Sciatic nerve (tissue), 2 donors: ENCODE measurements at regions of chr9 and their contacts with region 1.

Region 1: GRCh38 chr9:136313111-136314055 is 9.5 kb upstream of the CCDC187 start:
- DNase-seq: no peak
- ATAC-seq: no peak

Region 2: DNA sequence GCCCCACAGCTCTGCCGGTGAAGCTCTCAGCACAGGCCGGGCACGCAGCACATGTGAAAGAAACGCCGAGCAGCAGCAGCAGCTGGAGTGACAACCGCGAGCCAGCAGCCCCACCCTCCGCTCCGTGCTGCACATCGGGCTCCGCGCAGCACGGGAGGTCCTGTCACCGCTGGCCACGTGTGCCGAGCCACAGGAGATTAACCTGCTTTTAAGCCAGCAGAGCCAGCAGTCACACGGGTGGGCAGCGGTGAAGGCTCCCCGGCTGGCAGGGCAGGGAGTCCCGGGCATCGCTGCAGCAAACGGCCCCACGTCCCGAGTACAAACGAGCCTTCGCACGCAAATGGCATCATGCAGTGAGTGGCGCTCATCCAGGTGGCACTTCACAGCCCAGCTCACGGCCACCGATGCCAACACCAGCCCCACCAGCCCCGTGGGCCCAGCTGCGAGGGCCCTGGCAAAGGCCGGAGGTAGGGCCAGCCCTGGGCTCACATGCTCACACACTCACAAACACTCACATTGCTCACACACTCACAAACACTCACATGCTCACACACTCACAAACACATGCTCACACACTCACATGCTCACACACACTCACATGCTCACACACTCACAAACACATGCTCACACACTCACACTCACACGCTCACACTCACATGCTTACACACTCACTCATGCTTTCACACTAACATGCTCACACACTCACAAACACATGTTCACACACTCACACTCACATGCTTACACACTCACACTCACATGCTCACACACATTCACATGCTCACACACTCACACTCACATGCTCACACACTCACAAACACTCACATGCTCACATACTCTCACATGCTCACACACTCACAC is 20.6 kb before region 1 on chr9:
- intact Hi-C with region 1: no loop called
- DNase-seq: no peak
- ATAC-seq: no peak

Region 3: GRCh38 chr9:136365775-136366222 is 52.4 kb after region 1 on chr9:
- intact Hi-C with region 1: loop called (anchors 2 kb)
- DNase-seq: no peak
- ATAC-seq: no peak

Region 4: GRCh38 chr9:136578915-136579649 is 265.7 kb after region 1 on chr9:
- intact Hi-C with region 1: no loop called
- DNase-seq: no peak
- ATAC-seq: peak; percentile 31